Right ventricle myocardium inferior (tissue), 1 donor: ENCODE measurements at regions of chrX and their contacts with region 1.

Region 1: GRCh38 chrX:28850955-28851354 is 263.7 kb downstream of the IL1RAPL1 start:
- DNase-seq: no peak
- ATAC-seq: peak; percentile 80

Region 2: DNA sequence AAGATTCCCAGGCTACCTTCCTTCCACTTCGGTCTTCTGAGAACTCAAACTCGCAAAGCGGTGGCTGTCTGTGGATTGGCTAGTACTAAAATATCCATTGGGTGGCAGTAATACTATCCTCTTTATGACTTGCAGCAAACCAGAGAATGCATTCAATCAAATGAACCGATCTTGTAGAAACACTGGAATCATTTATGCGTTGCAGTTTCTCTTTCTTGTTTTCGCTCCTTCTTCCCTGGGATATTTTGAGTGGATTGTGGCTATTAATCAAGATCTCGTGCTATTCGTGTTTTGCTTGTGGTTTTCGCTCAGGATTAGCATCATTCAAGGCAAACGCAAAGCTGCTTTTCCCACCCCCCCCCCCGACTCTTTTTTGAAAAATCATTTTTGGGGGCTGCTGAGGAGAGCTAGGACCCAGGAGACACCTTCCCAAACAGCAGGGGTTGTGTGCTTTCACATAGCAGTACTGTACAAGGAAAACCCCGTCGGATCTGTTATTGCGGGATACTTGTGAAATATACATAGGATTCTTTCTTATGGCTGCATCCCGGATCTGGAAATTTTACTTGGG is 263.9 kb before region 1 on chrX and contains the start of gene IL1RAPL1:
- intact Hi-C with region 1: loop called (anchors 2 kb)
- DNase-seq: no peak
- ATAC-seq: peak; percentile 84
- total RNA-seq, gene IL1RAPL1: 4.0 TPM

Region 3: GRCh38 chrX:28609917-28610613 is 240.9 kb before region 1 on chrX:
- intact Hi-C with region 1: loop called (anchors 5 kb)
- DNase-seq: peak; percentile 66
- ATAC-seq: peak; percentile 71

Region 4: GRCh38 chrX:28756647-28757046 is 94.3 kb before region 1 on chrX:
- intact Hi-C with region 1: loop called (anchors 5 kb)
- DNase-seq: no peak
- ATAC-seq: peak; percentile 85

Region 5: GRCh38 chrX:28787206-28787605 is 63.7 kb before region 1 on chrX:
- intact Hi-C with region 1: no loop called
- DNase-seq: no peak
- ATAC-seq: no peak

Region 6: DNA sequence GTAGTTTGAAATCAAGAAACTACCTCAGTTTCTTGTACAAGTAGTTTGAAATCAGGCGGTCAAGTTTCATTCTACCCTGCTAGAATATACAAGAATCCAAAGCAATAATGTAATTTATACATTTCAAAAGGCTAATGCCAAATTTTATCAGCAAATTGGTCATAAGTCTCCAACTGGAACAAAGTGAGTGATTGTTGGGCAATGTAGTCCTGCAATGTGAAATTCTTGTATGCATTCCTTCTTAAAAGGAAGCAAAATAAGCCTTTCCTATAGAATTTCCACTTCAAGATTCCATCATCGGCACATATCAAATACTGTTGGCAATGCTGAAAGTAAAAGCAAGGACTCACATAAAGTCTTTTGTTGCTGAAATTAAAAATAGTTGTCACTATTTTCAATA is 71.2 kb after region 1 on chrX:
- intact Hi-C with region 1: no loop called
- DNase-seq: no peak
- ATAC-seq: no peak

Region 7: GRCh38 chrX:29071525-29072315 is 220.8 kb after region 1 on chrX:
- intact Hi-C with region 1: loop called (anchors 10 kb)
- DNase-seq: no peak
- ATAC-seq: no peak